ENCODE measurements at regions of chr4 and their contacts with region 1.

Region 1: GRCh38 chr4:133154725-133155124 is 5.6 kb downstream of the PCDH10 start:
- DNase-seq: no peak
- ATAC-seq: no peak
- H3K4me3 Mint-ChIP-seq: no peak overlapping the region
- H3K27ac Mint-ChIP-seq: no peak overlapping the region
- H3K4me1 Mint-ChIP-seq: peaks cover 47% of the 10 kb centered on the region
- H3K27me3 Mint-ChIP-seq: peaks cover 43% of the 10 kb centered on the region
- CTCF ChIP-seq: peak; percentile 47

Region 2: GRCh38 chr4:132818091-132818490 is 336.6 kb before region 1 on chr4:
- CTCF ChIA-PET with region 1: interaction called, 11 read pairs
- POLR2A ChIA-PET with region 1: no interaction called
- DNase-seq: peak; percentile 78
- ATAC-seq: peak; percentile 94
- H3K4me3 Mint-ChIP-seq: peak overlapping the region; percentile 56
- H3K27ac Mint-ChIP-seq: no peak overlapping the region
- H3K4me1 Mint-ChIP-seq: peaks cover 12% of the 10 kb centered on the region
- H3K27me3 Mint-ChIP-seq: no peaks in the 10 kb centered on the region
- CTCF ChIP-seq: peak; percentile 57